ENCODE measurements at regions of chr17 and their contacts with region 1.

Region 1: DNA sequence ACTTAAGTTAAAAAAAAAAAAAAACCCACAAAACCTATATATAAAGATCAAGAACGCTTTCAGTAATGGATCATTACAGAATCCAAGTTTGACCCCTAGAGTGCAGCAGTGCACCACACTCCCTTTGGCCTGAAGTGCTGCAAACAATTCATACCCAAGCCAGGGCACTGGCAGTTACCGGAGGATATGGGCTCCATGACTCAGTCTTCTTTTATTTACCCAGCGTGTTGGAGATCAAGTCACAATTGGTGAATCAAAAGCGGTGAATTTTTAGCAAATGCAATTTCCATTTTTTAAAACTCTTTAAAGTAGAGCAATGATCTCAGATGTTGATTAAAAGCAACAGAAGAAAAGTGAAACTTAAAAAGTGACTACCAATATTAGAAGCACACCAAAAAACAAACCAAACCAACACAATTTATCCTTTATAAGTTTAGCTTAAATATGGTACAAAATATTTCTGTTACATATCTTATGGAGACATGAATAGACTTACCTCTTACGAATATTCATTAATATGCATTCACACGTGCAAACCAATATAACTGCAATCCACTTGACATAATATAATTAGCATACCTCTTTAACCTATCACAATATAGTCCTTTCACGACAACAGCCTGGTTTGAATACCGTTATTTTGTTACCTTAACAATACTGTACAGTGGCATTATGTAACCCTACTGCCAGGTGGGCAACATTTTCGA is 46.3 kb downstream of the ZNF652 start:
- DNase-seq: peak; percentile 76 to 87 (median 77)
- H3K4me3 ChIP-seq: no peak overlapping the region
- H3K4me3 Mint-ChIP-seq: peak overlapping the region; percentile 38 to 87 (median 80)
- H3K27ac ChIP-seq: no peak overlapping the region
- H3K27ac Mint-ChIP-seq: peak overlapping the region; percentile 31 to 86 (median 60)
- H3K4me1 ChIP-seq: peaks cover 12% of the 10 kb centered on the region
- H3K4me1 Mint-ChIP-seq: peaks cover 17 to 41% (median 26%) of the 10 kb centered on the region in 4 donors
- H3K27me3 ChIP-seq: no peaks in the 10 kb centered on the region
- H3K27me3 Mint-ChIP-seq: no peaks in the 10 kb centered on the region

Region 2: GRCh38 chr17:49343273-49343672 is 27.6 kb after region 1 on chr17:
- CTCF ChIA-PET with region 1: interaction called, 20 read pairs
- POLR2A ChIA-PET with region 1: interaction called, 6 read pairs
- intact Hi-C with region 1: no loop called
- DNase-seq: peak; percentile 19 to 56 (median 23)
- H3K4me3 ChIP-seq: peak overlapping the region in 1 of 2 donors; percentile 24
- H3K4me3 Mint-ChIP-seq: peak overlapping the region; percentile 57 to 85 (median 82)
- H3K27ac ChIP-seq: peak overlapping the region; percentile 48
- H3K27ac Mint-ChIP-seq: peak overlapping the region; percentile 32 to 95 (median 85)
- H3K4me1 ChIP-seq: peaks cover 83% of the 10 kb centered on the region
- H3K4me1 Mint-ChIP-seq: peaks cover 36 to 81% (median 61%) of the 10 kb centered on the region in 4 donors
- H3K27me3 ChIP-seq: no peaks in the 10 kb centered on the region
- H3K27me3 Mint-ChIP-seq: no peaks in the 10 kb centered on the region

Region 3: DNA sequence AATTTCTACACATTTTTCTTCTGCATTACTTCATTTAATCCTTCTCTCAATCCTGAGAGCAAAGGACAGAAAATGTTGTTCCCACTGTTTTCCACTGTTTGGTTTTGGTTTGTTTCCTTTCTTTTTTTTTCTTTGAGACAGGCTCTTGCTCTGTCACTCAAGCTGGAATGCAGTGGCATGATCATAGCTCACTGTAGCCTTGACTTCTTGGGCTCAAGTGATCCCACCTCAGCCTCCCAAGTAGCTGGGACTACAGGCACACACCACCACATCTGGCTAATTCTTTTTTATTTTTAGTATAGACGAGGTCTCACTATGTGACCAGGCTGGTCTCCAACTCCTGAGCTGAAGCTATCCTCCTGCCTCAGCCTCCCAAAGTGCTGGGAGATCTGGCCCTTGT is 53.4 kb after region 1 on chr17:
- CTCF ChIA-PET with region 1: interaction called, 170 read pairs
- POLR2A ChIA-PET with region 1: interaction called, 7 read pairs
- intact Hi-C with region 1: loop called (anchors 1 kb)
- DNase-seq: no peak
- H3K4me3 ChIP-seq: no peak overlapping the region
- H3K4me3 Mint-ChIP-seq: no peak overlapping the region
- H3K27ac ChIP-seq: no peak overlapping the region
- H3K27ac Mint-ChIP-seq: no peak overlapping the region
- H3K4me1 ChIP-seq: peaks cover 14% of the 10 kb centered on the region
- H3K4me1 Mint-ChIP-seq: peaks cover 10 to 19% (median 18%) of the 10 kb centered on the region in 4 donors
- H3K27me3 ChIP-seq: no peaks in the 10 kb centered on the region
- H3K27me3 Mint-ChIP-seq: no peaks in the 10 kb centered on the region

Region 4: DNA sequence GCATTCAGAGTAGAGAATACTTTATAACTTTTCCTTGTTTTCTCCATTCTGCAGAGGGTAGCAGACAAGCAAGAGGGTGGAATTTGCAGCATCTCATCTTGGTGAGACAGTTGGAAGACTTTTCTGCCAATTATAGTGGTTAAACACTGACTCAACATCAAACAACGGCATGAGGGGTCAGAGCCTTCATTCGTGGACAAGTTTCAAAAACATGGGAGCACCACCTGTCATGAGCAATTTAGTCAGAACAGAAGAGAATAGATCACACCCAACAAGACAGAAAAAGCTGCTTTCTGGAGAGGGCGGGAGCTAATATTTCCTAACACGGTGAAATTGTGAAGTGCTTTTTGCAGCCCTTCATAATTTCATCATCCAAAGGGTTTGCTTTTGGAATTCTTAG is 64.2 kb after region 1 on chr17:
- CTCF ChIA-PET with region 1: no interaction called
- POLR2A ChIA-PET with region 1: no interaction called
- intact Hi-C with region 1: no loop called
- DNase-seq: no peak
- H3K4me3 ChIP-seq: no peak overlapping the region
- H3K4me3 Mint-ChIP-seq: no peak overlapping the region
- H3K27ac ChIP-seq: no peak overlapping the region
- H3K27ac Mint-ChIP-seq: no peak overlapping the region
- H3K4me1 ChIP-seq: no peaks in the 10 kb centered on the region
- H3K4me1 Mint-ChIP-seq: peaks cover 0 to 5% (median 2%) of the 10 kb centered on the region in 4 donors
- H3K27me3 ChIP-seq: no peaks in the 10 kb centered on the region
- H3K27me3 Mint-ChIP-seq: no peaks in the 10 kb centered on the region

Region 5: DNA sequence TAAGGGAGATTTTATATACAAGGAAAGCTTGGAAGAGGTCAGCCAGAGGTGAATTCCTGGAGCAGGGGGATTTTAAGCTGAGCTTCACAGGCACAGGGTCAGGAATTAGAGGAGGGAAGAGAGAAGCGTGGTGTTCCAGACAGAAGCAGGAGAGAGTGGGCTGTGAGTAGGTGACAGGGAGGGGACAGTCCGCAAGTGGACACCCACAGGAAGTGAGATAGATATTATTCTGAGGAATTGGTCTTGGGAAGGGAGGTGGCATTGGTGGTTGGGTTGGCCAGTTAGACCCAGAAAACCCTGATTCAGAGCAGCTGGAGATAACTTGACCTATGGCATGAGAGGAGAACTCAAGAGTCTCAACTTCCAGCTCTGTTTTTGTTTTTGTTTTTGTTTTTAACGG is 84.3 kb after region 1 on chr17:
- CTCF ChIA-PET with region 1: interaction called, 142 read pairs
- POLR2A ChIA-PET with region 1: interaction called, 4 read pairs
- intact Hi-C with region 1: loop called (anchors 1 kb)
- DNase-seq: no peak
- H3K4me3 ChIP-seq: no peak overlapping the region
- H3K4me3 Mint-ChIP-seq: no peak overlapping the region
- H3K27ac ChIP-seq: no peak overlapping the region
- H3K27ac Mint-ChIP-seq: no peak overlapping the region
- H3K4me1 ChIP-seq: peaks cover under 1% of the 10 kb centered on the region
- H3K4me1 Mint-ChIP-seq: peaks cover under 1 to 12% (median 2%) of the 10 kb centered on the region in 4 donors
- H3K27me3 ChIP-seq: no peaks in the 10 kb centered on the region
- H3K27me3 Mint-ChIP-seq: no peaks in the 10 kb centered on the region

Region 6: GRCh38 chr17:49471089-49471683 is 155.5 kb after region 1 on chr17:
- CTCF ChIA-PET with region 1: no interaction called
- POLR2A ChIA-PET with region 1: no interaction called
- intact Hi-C with region 1: no loop called
- DNase-seq: no peak
- H3K4me3 ChIP-seq: no peak overlapping the region
- H3K4me3 Mint-ChIP-seq: peak overlapping the region in 1 of 8 donors; percentile 11
- H3K27ac ChIP-seq: no peak overlapping the region
- H3K27ac Mint-ChIP-seq: no peak overlapping the region
- H3K4me1 ChIP-seq: peaks cover 6% of the 10 kb centered on the region
- H3K4me1 Mint-ChIP-seq: peaks cover 0 to 12% (median 8%) of the 10 kb centered on the region in 4 donors
- H3K27me3 ChIP-seq: peaks cover 28% of the 10 kb centered on the region
- H3K27me3 Mint-ChIP-seq: peaks cover 40 to 68% of the 10 kb centered on the region in 2 donors

Region 7: DNA sequence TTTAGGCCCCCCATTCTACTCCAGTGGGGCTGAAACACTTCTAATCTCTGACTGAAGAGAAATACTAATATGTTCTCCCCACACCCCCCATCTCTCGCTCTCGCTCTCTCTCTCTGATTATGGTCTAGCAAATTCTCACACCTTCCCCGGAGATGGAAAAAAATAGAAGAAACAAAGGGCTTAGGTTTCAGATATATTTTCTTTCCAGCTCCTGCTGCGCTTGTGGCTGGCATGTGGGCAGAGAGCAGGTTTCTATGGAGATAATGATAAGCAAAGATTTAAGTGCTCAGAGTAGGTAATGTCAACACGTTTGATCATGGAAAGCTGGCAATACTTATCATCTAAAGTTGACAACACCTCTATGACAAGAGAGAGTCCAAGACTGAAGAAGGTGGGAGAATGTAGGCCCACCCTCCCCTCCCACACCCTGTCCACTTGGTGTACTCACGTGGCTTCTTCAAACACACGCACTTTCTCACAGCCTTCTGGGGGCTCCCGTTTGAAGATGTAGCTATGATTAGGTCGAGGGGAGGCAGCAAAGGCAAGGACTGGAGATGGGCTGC is 400.1 kb after region 1 on chr17:
- CTCF ChIA-PET with region 1: no interaction called
- POLR2A ChIA-PET with region 1: no interaction called
- intact Hi-C with region 1: no loop called
- DNase-seq: peak; percentile 77 to 89 (median 84)
- H3K4me3 ChIP-seq: peak overlapping the region in 1 of 2 donors; percentile 1
- H3K4me3 Mint-ChIP-seq: peak overlapping the region; percentile 52 to 85 (median 60)
- H3K27ac ChIP-seq: peak overlapping the region; percentile 78
- H3K27ac Mint-ChIP-seq: peak overlapping the region; percentile 92 to 99 (median 98)
- H3K4me1 ChIP-seq: peaks cover 46% of the 10 kb centered on the region
- H3K4me1 Mint-ChIP-seq: peaks cover 37 to 53% (median 44%) of the 10 kb centered on the region in 4 donors
- H3K27me3 ChIP-seq: no peaks in the 10 kb centered on the region
- H3K27me3 Mint-ChIP-seq: peaks cover 0 to 2% of the 10 kb centered on the region in 2 donors